Cardiac septum (tissue), 1 donor: ENCODE measurements at regions of chr2 and their contacts with region 1.

Region 1: DNA sequence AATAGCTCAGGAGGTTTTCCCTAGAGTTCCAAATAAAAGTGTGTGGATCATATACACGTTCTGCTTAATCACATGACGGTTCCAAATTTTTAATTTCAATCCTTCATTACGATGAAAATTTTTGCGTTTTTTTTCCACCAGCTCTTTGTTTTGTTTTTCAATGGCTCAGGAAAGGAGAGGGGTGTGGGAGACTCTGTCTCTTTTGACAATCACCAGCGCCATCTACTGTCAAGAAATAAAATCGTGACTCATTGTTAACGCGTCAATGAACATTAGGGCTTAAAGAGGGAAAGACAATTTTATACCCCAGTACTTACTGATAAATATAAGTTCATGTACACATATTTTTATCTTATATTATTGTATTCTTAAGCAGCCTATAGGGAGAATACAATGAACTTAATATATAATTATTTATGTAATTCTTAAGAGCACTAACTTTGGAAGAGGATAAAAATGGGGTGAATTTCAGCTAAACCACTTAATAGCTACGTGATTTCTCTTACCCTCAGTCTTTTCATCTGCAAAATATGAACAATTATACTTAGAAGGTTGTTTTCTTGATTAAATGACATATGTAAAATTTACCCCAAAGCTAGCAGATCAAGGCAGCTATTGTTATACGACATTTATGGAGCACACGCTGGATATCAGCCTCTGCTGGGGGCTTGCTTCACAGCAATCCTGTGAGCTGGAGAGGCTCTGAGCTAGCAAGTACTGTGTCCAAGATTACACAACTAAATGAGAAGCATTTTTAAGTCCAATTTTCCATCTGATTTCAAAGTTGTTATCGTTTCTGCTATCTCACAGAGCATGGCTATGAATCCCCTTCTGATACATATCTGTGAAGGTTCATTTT is 47.4 kb upstream of the RMDN2 start:
- DNase-seq: no peak

Region 2: DNA sequence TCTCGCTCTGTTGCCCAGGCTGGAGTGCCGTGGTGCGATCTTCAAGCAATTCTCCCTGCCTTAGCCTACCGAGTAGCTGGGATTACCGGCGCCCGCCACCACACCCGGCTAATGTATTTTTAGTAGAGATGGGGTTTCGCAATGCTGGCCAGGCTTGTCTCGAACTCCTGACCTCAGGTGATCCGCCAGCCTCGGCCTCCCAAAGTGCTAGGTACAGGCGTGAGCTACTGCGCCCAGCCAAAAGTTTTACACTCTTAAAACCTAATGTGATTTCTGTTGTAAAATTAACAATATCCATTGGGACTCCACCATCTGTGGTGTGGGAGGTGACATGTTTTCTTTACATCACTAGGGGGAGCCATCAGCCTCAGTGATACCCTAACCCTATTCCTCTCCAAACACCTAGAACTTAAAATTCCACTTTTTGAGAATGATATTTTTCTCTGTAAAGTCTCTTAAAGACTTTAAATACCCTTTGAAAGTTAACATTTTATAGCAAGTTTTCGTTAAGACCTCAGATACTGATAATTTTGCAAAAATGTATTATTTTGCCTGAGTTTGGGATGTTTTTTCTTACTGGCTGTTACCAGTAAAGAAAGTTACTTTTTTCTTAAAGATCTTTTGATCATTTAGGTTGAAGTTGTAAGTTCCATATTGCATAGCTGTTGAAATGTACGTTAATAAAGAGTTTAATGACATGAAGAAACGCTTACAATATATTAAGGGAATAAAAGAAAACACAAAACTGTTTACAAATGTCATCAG is 709.3 kb before region 1 on chr2:
- intact Hi-C with region 1: loop called (anchors 10 kb)
- DNase-seq: no peak

Region 3: DNA sequence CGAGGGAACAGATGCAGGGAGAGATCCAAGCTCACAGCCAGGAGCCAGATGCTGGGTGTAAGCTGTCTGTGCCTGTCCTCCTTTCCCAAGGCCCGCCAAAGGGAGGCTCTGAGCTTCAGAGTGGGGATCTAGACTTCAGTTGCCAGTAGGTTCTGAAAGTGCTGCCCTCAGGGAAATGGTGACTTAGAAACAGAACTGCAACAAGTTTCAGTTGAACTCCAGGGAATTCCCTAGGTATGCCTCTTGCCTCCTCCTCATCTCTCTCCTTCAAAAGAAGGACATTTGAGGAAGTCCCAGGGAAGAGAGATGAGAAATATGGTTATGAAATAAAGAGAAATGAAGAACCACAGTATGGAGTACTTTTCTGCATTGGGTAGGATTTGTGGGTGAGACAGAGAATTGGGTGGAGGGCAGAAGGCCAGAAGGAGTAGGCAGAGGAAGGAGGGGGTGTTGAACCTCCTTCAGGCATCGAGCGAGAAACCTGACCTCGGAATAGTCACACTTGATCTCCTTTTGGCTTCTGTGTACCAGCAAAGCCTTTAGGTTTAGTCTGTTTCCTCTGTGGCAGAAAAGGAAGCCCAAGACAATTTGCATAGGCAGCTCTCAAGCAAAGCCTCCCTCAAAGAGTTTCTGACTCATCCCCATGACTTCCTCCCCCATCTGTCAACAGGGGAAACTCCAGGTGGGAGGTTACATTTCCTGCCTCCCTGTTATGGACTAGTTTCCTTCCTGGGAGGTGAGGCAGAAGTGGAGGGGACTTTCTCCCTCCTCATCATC is 487.5 kb before region 1 on chr2:
- intact Hi-C with region 1: loop called (anchors 5 kb)
- DNase-seq: no peak

Region 4: DNA sequence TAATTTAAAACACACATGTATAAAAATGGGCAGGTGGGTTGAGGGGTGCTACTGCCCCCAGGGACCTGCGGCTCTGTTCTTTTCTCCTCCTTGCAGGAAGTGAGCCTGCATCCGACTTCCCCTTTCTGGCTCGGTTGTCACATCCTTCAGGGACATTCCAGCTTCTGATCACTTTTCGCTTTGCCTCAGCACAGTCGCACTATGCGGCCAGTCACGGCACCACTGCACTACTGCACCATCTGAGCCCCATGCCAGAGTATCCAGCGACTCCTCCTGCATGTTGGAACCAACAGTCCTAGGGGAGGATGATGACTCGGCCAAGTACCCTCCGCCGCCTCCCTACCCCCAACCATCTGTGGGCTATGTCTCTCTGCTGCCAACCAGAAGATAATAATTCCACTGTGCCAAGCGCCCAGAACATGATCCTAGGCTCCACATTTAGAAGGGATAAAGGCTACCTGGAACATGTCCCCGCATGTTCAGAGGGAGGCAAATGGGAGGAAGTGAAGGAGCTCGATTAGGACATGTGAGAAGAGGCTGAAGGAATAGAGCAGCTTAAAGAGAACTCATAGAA is 223.8 kb before region 1 on chr2:
- intact Hi-C with region 1: loop called (anchors 10 kb)
- DNase-seq: peak; percentile 87

Region 5: DNA sequence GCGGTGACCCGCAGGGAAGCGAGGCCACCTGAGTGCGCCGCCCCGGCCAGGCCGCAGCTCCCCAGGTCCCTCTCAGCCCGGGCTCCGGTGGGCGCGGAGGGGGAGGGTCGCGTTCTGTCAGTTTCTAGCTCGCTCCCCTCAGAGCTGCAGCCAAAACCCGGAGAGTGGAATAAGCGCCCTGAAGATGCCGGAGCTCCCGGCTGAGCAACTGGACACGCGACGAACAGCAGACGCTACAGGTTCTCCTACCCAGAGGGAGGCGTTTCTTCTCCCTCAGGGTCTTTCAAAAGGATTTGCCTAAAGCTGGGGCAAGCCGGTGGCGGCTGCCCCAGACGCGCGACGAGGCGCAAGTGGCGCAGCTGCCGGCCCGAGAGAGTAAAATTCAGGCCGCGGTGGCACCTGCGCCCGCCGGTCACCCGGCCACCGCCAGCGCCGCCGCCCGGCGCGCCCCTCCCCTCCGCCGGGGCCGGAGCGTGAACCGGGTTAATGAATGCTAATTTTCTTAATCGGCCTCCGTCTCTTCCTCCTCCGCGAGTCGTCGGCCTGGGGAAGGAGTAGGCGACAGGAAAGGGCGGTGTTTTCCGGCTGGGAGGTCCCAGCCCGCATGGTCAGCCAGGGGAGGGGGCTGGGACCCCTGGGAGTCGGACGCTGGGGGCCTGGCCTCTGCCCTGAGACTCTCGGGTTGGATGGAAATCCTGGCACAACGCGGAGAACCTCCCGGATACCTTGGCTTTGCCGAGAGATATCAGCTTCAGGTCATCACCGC is 205.4 kb before region 1 on chr2:
- intact Hi-C with region 1: loop called (anchors 5 kb)
- DNase-seq: peak; percentile 90

Region 6: GRCh38 chr2:37832590-37833197 is 45.0 kb before region 1 on chr2:
- intact Hi-C with region 1: loop called (anchors 1 kb)
- DNase-seq: peak; percentile 91